HEK293 (cell line): ENCODE measurements at regions of chr1 and their contacts with region 1.

Region 1: GRCh38 chr1:202852163-202852904 is 36.6 kb downstream of the RABIF start:
- H3K4me3 ChIP-seq: no peak overlapping the region
- H3K27ac ChIP-seq: no peak overlapping the region
- H3K4me1 ChIP-seq: no peaks in the 10 kb centered on the region
- CTCF ChIP-seq: peak; percentile 54; the same call in 1 of the 2 replicates

Region 2: DNA sequence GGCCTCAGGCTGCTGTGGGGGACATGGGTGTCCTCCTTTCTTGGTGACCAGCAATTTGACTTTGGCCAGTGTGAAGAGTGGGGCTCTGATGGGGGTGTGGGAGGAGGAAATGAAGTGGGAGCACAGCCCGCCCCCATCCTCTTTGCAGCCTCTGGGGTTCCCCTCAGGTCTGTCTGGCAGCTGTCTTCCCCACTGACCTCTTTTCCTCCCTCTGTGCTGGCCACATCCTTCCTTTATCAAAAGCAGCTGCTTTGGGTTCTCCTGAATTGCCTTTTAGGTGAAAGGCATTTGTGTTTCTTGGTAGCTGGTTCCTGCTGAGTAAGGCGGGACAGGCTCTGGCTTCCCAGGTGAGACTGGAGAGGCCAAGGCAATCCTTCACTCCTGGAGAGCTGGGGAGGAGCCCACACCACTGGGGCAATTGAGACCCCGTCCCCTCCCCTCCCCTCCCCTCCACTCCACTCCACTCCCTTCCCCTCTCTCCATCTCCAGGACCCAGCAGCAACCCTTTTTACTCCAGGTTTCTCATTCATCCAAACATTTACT is 16.7 kb before region 1 on chr1:
- CTCF ChIA-PET with region 1: interaction called, 10 read pairs
- POLR2A ChIA-PET with region 1: no interaction called
- H3K4me3 ChIP-seq: no peak overlapping the region
- H3K27ac ChIP-seq: no peak overlapping the region
- H3K4me1 ChIP-seq: no peaks in the 10 kb centered on the region
- CTCF ChIP-seq: no peak